ENCODE measurements at regions of chr19 and their contacts with region 1.

Region 1: DNA sequence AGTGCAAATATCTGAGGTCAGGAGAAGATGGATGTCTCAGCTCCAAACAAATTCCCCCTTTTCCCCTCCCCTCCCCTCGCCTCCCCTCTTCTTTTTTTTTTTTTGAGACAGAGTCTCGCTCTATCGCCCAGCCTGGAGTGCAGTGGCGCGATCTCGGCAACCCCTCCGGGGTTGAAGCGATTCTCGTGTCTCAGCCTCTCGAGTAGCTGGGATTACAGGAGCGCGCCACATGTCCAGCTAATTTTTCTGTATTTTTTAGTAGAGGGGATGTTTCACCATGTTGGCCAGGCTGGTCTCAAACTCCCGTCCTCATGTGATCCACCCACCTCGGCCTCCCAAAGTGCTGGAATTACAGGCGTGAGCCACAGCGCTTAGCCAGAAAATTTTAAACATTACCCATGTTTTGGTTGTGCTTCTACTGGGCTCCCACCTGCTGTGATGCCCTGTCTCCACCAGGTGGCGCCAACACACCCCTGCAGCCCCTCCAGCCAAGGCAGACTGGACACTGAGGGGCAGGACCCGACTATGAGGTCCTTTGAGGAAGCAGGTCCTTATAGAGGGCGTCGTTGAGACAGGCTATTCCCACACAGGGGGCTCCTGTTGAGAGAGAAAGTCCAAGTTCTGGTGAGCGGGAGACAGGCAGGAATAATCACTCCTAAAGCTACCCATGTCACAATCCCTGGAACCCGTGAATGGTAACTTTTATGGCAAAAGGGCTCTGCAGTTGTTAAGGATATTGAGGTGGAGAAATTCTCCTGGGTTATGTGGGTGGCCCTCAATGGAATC is 6.3 kb downstream of the ERICH4 start:
- DNase-seq: peak; percentile 79 to 84
- ATAC-seq: peak; percentile 76 to 92 (median 88)
- H3K4me3 ChIP-seq: peak overlapping the region; percentile 52
- H3K27ac ChIP-seq: no peak overlapping the region
- H3K4me1 ChIP-seq: peaks cover 5% of the 10 kb centered on the region
- H3K27me3 ChIP-seq: peaks cover 0 to 3% (median 0%) of the 10 kb centered on the region in 3 donors
- CTCF ChIP-seq: peak; percentile 96

Region 2: GRCh38 chr19:41278478-41278877 is 170.8 kb before region 1 on chr19:
- intact Hi-C with region 1: no loop called
- DNase-seq: no peak
- ATAC-seq: no peak
- H3K4me3 ChIP-seq: no peak overlapping the region
- H3K27ac ChIP-seq: no peak overlapping the region
- H3K4me1 ChIP-seq: no peaks in the 10 kb centered on the region
- H3K27me3 ChIP-seq: no peaks in the 10 kb centered on the region
- CTCF ChIP-seq: no peak

Region 3: DNA sequence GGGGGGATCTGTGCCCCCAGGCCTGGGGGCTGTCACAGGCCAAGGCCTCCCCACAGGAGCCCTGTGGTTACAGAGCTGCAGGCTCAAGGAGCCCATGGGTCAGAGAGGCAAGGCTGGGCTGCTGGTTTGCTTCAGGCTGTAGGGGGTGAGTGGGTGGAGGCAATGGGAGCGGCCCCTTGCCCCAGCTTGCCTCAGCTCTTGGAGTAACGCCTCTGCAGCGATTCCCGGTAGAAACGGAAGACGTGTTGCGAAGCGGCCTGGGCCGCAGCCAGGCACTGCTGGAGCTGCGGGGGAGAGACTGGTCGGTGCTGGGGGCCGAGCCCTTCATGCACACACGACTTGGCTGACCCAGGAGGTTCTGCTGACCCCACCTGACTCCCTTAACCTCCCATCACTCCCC is 62.8 kb before region 1 on chr19:
- intact Hi-C with region 1: no loop called
- DNase-seq: no peak
- ATAC-seq: no peak
- H3K4me3 ChIP-seq: no peak overlapping the region
- H3K27ac ChIP-seq: no peak overlapping the region
- H3K4me1 ChIP-seq: no peaks in the 10 kb centered on the region
- H3K27me3 ChIP-seq: no peaks in the 10 kb centered on the region
- CTCF ChIP-seq: no peak

Region 4: GRCh38 chr19:41426952-41427646 is 22.2 kb before region 1 on chr19 and contains the start of gene B3GNT8:
- intact Hi-C with region 1: no loop called
- DNase-seq: peak; percentile 86 to 87
- ATAC-seq: peak; percentile 19 to 59 (median 42)
- H3K4me3 ChIP-seq: peak within 1 kb of the TSS; percentile 64
- H3K27ac ChIP-seq: peak within 1 kb of the TSS; percentile 72
- H3K4me1 ChIP-seq: peaks cover 16% of the 10 kb centered on the region
- H3K27me3 ChIP-seq: no peaks in the 10 kb centered on the region
- CTCF ChIP-seq: no peak
- total RNA-seq, gene B3GNT8: 0.55 to 1.9 (median 1.3) TPM

Region 5: DNA sequence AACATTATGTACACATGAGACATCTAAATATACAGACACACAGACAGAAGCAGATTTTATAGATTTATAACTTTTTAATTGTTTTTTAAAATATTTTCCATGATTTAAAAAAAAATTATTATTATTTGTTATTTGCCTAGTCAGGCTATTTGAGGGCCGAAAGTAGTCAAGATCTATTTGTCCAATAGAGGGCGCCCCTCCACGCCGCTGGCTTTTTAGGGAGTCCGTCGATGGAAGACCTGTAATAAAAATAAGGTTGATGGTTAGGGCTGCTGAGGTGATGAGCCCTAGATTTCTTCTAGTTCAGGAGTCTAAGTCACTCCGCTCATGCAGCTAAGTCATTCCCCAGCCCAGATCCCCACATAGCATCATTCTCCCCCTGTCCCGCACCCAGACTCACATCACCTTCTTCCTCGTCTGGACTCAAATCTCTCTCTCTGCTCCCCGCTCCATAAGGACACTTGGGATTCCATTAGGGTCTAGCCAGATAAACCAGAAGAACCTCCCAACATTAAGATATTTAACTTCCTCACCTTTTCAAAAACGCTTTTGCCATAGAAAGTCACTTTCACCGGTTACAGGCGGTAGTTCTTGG is 92.8 kb after region 1 on chr19:
- intact Hi-C with region 1: loop called in 1 of 2 experiments (anchors 5 kb)
- DNase-seq: peak in 1 of 2 donors; percentile 47
- ATAC-seq: no peak
- H3K4me3 ChIP-seq: no peak overlapping the region
- H3K27ac ChIP-seq: no peak overlapping the region
- H3K4me1 ChIP-seq: no peaks in the 10 kb centered on the region
- H3K27me3 ChIP-seq: peaks cover 0 to 5% (median 0%) of the 10 kb centered on the region in 3 donors
- CTCF ChIP-seq: peak; percentile 44

Region 6: DNA sequence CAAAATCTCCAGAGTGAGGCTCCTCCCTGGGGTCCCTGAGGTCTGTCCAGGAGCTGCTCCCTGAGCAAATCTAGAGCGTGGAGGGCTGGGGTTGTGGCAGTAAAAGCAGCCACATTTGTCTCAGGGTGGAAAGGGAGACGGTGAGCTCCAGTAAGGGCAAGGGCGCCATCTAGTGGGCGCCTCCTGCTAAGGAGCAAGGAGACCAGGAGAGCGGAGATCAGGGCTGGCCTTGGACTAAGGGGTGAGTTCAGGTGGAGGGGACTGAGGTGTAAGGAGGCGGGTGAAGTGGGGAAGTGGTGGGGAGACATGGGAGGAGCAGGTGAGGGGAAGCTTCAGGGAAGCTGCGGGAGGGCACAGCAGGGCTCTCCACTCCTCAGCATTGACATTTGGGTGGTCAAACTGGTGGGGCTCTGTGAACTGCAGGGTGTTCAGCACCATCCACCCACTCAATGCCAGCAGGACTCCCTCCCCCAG is 121.4 kb after region 1 on chr19:
- intact Hi-C with region 1: loop called in 1 of 2 experiments (anchors 5 kb)
- DNase-seq: peak; percentile 77 to 84
- ATAC-seq: peak in 1 of 4 donors; percentile 78
- H3K4me3 ChIP-seq: no peak overlapping the region
- H3K27ac ChIP-seq: no peak overlapping the region
- H3K4me1 ChIP-seq: no peaks in the 10 kb centered on the region
- H3K27me3 ChIP-seq: peaks cover 0 to 18% (median 1%) of the 10 kb centered on the region in 3 donors
- CTCF ChIP-seq: peak; percentile 53

Region 7: GRCh38 chr19:41597600-41598041 is 148.3 kb after region 1 on chr19:
- intact Hi-C with region 1: loop called in 1 of 2 experiments (anchors 2 kb)
- DNase-seq: peak in 1 of 2 donors; percentile 49
- ATAC-seq: peak in 1 of 4 donors; percentile 54
- H3K4me3 ChIP-seq: no peak overlapping the region
- H3K27ac ChIP-seq: no peak overlapping the region
- H3K4me1 ChIP-seq: no peaks in the 10 kb centered on the region
- H3K27me3 ChIP-seq: peaks cover 0 to 19% (median 0%) of the 10 kb centered on the region in 3 donors
- CTCF ChIP-seq: peak; percentile 77

Region 8: DNA sequence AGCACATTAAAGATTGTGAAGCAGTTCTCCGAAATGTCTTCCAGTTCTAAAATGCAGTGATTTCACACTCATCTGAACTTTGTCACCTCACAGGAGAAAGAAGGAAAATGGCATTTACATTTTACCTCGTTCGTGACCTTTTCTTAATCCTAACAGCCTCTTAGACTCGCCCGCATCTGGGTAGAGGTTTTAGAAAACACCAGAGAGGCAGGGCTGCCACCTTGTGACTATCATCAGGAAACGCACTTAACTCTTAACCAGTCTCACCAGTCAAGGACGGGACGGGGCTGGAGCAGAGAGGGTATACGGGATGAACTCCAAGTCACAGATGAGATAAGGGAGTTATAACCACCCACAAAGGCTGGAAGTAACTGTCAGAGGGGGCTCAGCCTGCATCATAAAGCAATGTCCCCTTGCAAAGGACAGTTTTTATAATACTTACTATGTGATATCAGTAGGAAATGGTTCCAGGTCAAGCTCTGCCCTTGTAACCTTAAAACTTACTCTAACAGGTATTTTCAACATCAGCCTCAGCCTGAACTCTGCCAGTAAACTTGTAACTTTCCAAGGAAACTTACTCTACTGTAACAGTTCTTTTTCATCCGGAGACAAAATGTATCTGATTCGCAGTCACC is 297.4 kb after region 1 on chr19:
- intact Hi-C with region 1: loop called in 1 of 2 experiments (anchors 5 kb)
- DNase-seq: no peak
- ATAC-seq: no peak
- H3K4me3 ChIP-seq: no peak overlapping the region
- H3K27ac ChIP-seq: no peak overlapping the region
- H3K4me1 ChIP-seq: no peaks in the 10 kb centered on the region
- H3K27me3 ChIP-seq: peaks cover 0 to 27% (median 3%) of the 10 kb centered on the region in 3 donors
- CTCF ChIP-seq: peak; percentile 16

Measured in psoas muscle (tissue), 8 donors.